ENCODE measurements at regions of chr9 and their contacts with region 1.

Region 1: GRCh38 chr9:109817846-109818472 is 38.0 kb downstream of the PALM2AKAP2 start:
- DNase-seq: peak; percentile 20
- ATAC-seq: peak; percentile 86
- H3K4me3 ChIP-seq: no peak overlapping the region
- H3K27ac ChIP-seq: no peak overlapping the region
- H3K4me1 ChIP-seq: no peaks in the 10 kb centered on the region
- H3K27me3 ChIP-seq: peaks cover 0 to 8% of the 10 kb centered on the region in 2 experiments; a peak in 1 of 4 replicates
- CTCF ChIP-seq: peak; percentile 75 to 94 (median 77)
- EP300 ChIP-seq: no peak
- POLR2A ChIP-seq: no peak
- RAD21 ChIP-seq: peak; percentile 75

Region 2: DNA sequence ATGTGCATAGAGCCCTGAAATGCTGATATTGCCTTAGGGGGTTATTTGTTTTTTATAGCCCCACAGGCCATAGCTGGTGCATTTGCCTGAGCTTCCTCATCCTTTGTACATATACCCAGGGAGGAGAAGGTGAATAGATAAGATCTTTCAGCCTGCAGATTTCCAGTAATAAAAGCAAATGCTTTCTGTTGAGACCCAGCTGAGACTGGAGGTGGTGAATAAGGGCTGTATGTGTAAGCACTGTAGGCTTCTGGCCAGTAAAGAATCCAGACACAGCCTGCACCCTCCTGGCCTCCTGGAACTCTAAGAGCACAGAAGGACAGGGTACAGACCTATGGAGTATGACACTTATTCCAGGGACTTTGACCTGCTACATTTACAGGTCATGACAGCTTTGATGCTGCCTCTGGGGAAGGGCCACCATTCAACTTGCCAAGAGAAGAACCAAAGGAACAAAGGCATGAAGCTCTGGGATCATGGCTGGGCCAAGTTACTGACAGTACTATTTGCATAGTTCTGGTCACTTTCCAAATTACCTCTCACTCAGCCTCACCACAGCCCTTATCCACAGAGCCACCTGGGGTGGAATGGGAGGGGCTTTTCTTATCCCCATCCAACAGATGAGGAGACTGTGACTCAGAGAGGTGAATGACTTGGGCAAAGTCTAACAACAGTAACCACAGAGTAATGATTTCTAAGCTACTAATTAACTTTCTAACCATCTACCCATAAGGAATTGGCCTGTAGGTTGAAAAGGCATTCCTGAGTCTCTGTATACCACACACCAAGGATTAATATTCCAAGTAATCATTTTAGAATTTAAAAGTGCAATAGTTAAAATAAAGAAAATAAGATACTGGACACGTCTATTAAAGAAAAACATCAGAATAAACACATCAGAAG is 1723.9 kb before region 1 on chr9:
- CTCF ChIA-PET with region 1: no interaction called
- POLR2A ChIA-PET with region 1: no interaction called
- RAD21 ChIA-PET with region 1: no interaction called
- SMC1A ChIA-PET with region 1: no interaction called
- in situ Hi-C with region 1: no loop called
- intact Hi-C with region 1: no loop called
- DNase-seq: no peak
- ATAC-seq: no peak
- H3K4me3 ChIP-seq: no peak overlapping the region
- H3K27ac ChIP-seq: no peak overlapping the region
- H3K4me1 ChIP-seq: no peaks in the 10 kb centered on the region
- H3K27me3 ChIP-seq: no peaks in the 10 kb centered on the region
- CTCF ChIP-seq: no peak
- EP300 ChIP-seq: no peak
- POLR2A ChIP-seq: no peak
- RAD21 ChIP-seq: no peak

Region 3: GRCh38 chr9:109590945-109591344 is 227.0 kb before region 1 on chr9:
- CTCF ChIA-PET with region 1: interaction called, 7 read pairs
- POLR2A ChIA-PET with region 1: no interaction called
- RAD21 ChIA-PET with region 1: no interaction called
- SMC1A ChIA-PET with region 1: no interaction called
- in situ Hi-C with region 1: loop called (anchors 25 kb)
- intact Hi-C with region 1: no loop called
- DNase-seq: no peak
- ATAC-seq: no peak
- H3K4me3 ChIP-seq: no peak overlapping the region
- H3K27ac ChIP-seq: no peak overlapping the region
- H3K4me1 ChIP-seq: no peaks in the 10 kb centered on the region
- H3K27me3 ChIP-seq: no peaks in the 10 kb centered on the region
- CTCF ChIP-seq: no peak
- EP300 ChIP-seq: no peak
- POLR2A ChIP-seq: no peak
- RAD21 ChIP-seq: no peak

Region 4: GRCh38 chr9:109766336-109766735 is 51.6 kb before region 1 on chr9:
- CTCF ChIA-PET with region 1: no interaction called
- POLR2A ChIA-PET with region 1: no interaction called
- RAD21 ChIA-PET with region 1: no interaction called
- SMC1A ChIA-PET with region 1: no interaction called
- in situ Hi-C with region 1: no loop called
- intact Hi-C with region 1: no loop called
- DNase-seq: no peak
- ATAC-seq: no peak
- H3K4me3 ChIP-seq: no peak overlapping the region
- H3K27ac ChIP-seq: no peak overlapping the region
- H3K4me1 ChIP-seq: no peaks in the 10 kb centered on the region
- H3K27me3 ChIP-seq: peaks cover 0 to 3% of the 10 kb centered on the region in 2 experiments; a peak in 2 of 4 replicates
- CTCF ChIP-seq: no peak
- EP300 ChIP-seq: no peak
- POLR2A ChIP-seq: no peak
- RAD21 ChIP-seq: no peak

Region 5: DNA sequence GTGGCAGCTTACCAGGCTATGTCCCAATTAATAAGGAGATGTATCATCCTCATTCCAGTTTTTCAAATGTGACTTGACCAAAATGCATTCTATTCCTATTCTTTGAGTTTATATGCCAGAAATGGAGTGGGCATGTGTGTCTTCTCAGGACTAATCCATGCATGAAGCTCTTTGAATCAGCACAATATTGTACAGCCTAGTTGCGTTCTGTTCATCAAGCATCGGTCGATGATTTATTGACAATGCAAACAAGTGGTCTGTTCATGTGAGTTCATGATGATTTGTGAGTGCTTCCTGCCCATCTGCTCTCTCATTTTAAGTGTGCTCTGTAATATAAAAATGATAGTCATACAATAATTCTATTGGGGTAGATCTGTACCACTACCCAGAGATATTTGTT is 10.3 kb after region 1 on chr9:
- CTCF ChIA-PET with region 1: interaction called, 14 read pairs
- POLR2A ChIA-PET with region 1: no interaction called
- RAD21 ChIA-PET with region 1: no interaction called
- SMC1A ChIA-PET with region 1: no interaction called
- in situ Hi-C with region 1: no loop called
- intact Hi-C with region 1: no loop called
- DNase-seq: no peak
- ATAC-seq: no peak
- H3K4me3 ChIP-seq: no peak overlapping the region
- H3K27ac ChIP-seq: no peak overlapping the region
- H3K4me1 ChIP-seq: no peaks in the 10 kb centered on the region
- H3K27me3 ChIP-seq: peaks cover 0 to 3% of the 10 kb centered on the region in 2 experiments; a peak in 3 of 4 replicates
- CTCF ChIP-seq: no peak
- EP300 ChIP-seq: no peak
- POLR2A ChIP-seq: no peak
- RAD21 ChIP-seq: no peak

Region 6: GRCh38 chr9:109887079-109887478 is 69.1 kb after region 1 on chr9:
- CTCF ChIA-PET with region 1: interaction called, 22 read pairs
- POLR2A ChIA-PET with region 1: no interaction called
- RAD21 ChIA-PET with region 1: no interaction called
- SMC1A ChIA-PET with region 1: interaction called, 3 read pairs
- in situ Hi-C with region 1: no loop called
- intact Hi-C with region 1: no loop called
- DNase-seq: no peak
- ATAC-seq: peak; percentile 31; the same call in 2 of the 3 replicates
- H3K4me3 ChIP-seq: no peak overlapping the region
- H3K27ac ChIP-seq: no peak overlapping the region
- H3K4me1 ChIP-seq: peaks cover 22% of the 10 kb centered on the region
- H3K27me3 ChIP-seq: no peaks in the 10 kb centered on the region
- CTCF ChIP-seq: no peak
- EP300 ChIP-seq: no peak
- POLR2A ChIP-seq: no peak
- RAD21 ChIP-seq: no peak

Measured in GM12878 (cell line).